ENCODE measurements at regions of chr4 and their contacts with region 1.

Region 1: DNA sequence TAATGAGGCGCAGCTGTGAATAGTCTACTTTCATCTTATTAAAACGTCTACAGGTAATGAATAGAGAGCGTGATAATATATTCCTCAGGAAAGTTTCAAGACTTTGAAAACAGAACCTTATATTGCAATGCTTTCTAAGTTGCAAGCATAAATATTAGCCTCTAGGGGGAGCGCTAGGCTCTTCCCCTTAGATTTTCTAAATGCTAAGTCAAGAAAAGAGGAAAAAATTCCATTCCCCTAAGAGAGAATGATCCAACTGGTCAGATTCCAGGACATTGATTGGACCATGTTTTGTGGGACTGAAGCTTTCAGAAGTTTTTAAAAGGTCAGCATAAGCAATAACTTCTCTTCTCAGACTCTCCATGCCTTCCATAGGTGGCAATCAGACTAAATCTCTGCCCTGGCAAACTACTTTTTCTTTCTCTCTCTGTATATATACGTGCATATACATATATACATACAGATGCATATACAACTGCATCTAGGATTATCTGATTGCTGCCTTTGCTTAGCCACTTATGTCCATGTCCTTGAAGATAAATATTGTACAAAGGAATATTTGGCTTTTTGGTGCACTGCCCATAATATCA is 492.9 kb downstream of the INPP4B start:
- DNase-seq: no peak
- H3K4me3 ChIP-seq: peak overlapping the region in 1 of 2 donors; percentile 41
- H3K27ac ChIP-seq: peak overlapping the region; percentile 69 to 70
- H3K4me1 ChIP-seq: peaks cover 6 to 15% of the 10 kb centered on the region in 2 donors
- H3K27me3 ChIP-seq: no peaks in the 10 kb centered on the region
- CTCF ChIP-seq: peak; percentile 36 to 88 (median 82)

Region 2: GRCh38 chr4:141692081-141692480 is 661.2 kb before region 1 on chr4:
- intact Hi-C with region 1: no loop called
- DNase-seq: no peak
- H3K4me3 ChIP-seq: no peak overlapping the region
- H3K27ac ChIP-seq: no peak overlapping the region
- H3K4me1 ChIP-seq: no peaks in the 10 kb centered on the region
- H3K27me3 ChIP-seq: no peaks in the 10 kb centered on the region
- CTCF ChIP-seq: no peak

Region 3: GRCh38 chr4:142126890-142127497 is 226.2 kb before region 1 on chr4:
- intact Hi-C with region 1: loop called (anchors 2 kb)
- DNase-seq: peak in 1 of 2 donors; percentile 74
- H3K4me3 ChIP-seq: no peak overlapping the region
- H3K27ac ChIP-seq: no peak overlapping the region
- H3K4me1 ChIP-seq: peaks cover 0 to 14% of the 10 kb centered on the region in 2 donors
- H3K27me3 ChIP-seq: no peaks in the 10 kb centered on the region
- CTCF ChIP-seq: peak; percentile 51 to 85 (median 74)

Region 4: DNA sequence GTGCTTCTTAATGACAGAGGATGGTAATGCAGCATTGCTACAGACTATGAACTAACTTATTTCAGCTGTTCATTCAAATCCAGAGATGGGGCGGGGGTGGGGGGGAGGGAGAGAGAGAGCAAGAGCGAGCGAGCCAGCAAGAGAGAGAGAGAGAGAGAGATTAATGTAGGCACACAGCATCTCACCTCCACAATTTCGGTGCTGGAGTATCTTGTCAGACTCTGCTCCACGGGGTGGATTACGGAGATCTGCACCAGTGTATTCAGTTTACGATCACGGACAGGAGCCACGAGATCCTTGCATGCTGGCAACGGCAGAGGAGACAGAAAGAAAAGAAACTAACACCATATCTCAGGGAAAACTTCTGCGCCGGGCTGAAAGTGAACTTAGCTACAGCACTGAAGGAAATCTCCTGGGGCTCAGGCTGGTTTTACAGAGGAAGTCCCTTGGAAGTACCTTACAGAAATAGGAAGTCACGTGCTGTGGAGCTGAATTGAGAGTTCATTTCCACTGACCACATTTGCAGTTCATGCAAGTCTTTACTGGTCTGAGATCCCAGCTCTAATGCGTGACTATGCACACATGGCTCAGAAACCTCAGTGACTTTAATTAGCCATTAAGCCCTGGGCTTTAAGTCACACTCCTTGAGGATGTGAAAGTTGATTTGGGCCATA is 51.9 kb after region 1 on chr4:
- intact Hi-C with region 1: loop called (anchors 5 kb)
- DNase-seq: peak in 1 of 2 donors; percentile 69
- H3K4me3 ChIP-seq: peak overlapping the region; percentile 46 to 73
- H3K27ac ChIP-seq: peak overlapping the region; percentile 73 to 76
- H3K4me1 ChIP-seq: peaks cover 3 to 15% of the 10 kb centered on the region in 2 donors
- H3K27me3 ChIP-seq: no peaks in the 10 kb centered on the region
- CTCF ChIP-seq: no peak

Region 5: GRCh38 chr4:142567199-142567598 is 214.0 kb after region 1 on chr4:
- intact Hi-C with region 1: loop called (anchors 5 kb)
- DNase-seq: no peak
- H3K4me3 ChIP-seq: no peak overlapping the region
- H3K27ac ChIP-seq: peak overlapping the region; percentile 68 to 69
- H3K4me1 ChIP-seq: peaks cover 0 to 5% of the 10 kb centered on the region in 2 donors
- H3K27me3 ChIP-seq: no peaks in the 10 kb centered on the region
- CTCF ChIP-seq: no peak

Region 6: GRCh38 chr4:142656178-142656577 is 302.9 kb after region 1 on chr4:
- intact Hi-C with region 1: no loop called
- DNase-seq: no peak
- H3K4me3 ChIP-seq: no peak overlapping the region
- H3K27ac ChIP-seq: no peak overlapping the region
- H3K4me1 ChIP-seq: no peaks in the 10 kb centered on the region
- H3K27me3 ChIP-seq: no peaks in the 10 kb centered on the region
- CTCF ChIP-seq: no peak

Region 7: DNA sequence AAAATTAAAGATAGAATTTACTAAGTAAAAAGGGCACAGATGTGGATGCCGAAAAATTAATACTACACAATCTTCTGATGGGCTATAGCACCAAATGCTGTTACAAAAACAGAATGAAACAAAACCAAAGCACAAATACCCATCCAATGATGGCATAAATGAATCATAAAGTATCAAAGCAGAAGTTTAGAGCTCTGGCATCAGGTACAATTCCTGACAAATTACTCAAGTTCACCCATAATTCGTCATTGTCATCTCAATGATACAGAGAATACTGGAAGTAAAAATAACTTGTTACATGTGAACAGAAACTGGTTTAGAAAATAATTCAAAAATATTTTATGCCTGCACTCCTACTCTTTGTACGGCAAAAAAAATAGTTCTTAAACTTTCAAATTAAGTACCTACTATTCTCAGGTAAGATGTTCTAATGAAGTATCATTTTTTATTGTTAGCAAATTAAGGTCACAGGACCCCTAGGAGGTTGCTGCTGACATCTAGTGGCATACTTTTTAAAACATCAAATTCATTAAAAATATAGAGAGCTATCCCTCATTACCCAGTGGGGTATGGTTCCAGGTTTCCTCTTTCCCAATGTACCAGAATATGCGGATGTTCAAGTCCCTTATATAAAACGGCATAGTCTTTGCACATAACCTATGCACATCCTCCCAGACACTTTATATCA is 366.8 kb after region 1 on chr4:
- intact Hi-C with region 1: loop called (anchors 5 kb)
- DNase-seq: no peak
- H3K4me3 ChIP-seq: no peak overlapping the region
- H3K27ac ChIP-seq: no peak overlapping the region
- H3K4me1 ChIP-seq: no peaks in the 10 kb centered on the region
- H3K27me3 ChIP-seq: no peaks in the 10 kb centered on the region
- CTCF ChIP-seq: peak; percentile 15 to 50 (median 26)

Region 8: GRCh38 chr4:142846729-142847596 is 493.7 kb after region 1 on chr4:
- intact Hi-C with region 1: loop called (anchors 2 kb)
- DNase-seq: peak in 1 of 2 donors; percentile 69
- H3K4me3 ChIP-seq: peak overlapping the region; percentile 77 to 78
- H3K27ac ChIP-seq: peak overlapping the region; percentile 79 to 84
- H3K4me1 ChIP-seq: peaks cover 0 to 5% of the 10 kb centered on the region in 2 donors
- H3K27me3 ChIP-seq: no peaks in the 10 kb centered on the region
- CTCF ChIP-seq: peak; percentile 5 to 53 (median 32)

Measured in ascending aorta (tissue), 2 donors.